Activated naive CD4-positive, alpha-beta T cell treated with anti-CD3 and anti-CD28 coated beads for 36 hours (primary cell): ENCODE measurements at regions of chr1 and their contacts with region 1.

Region 1: GRCh38 chr1:84936116-84936810 is 43.3 kb upstream of the LPAR3 start:
- DNase-seq: peak; percentile 43
- H3K4me3 Mint-ChIP-seq: no peak overlapping the region
- H3K27ac Mint-ChIP-seq: no peak overlapping the region
- H3K4me1 Mint-ChIP-seq: peaks cover 4% of the 10 kb centered on the region
- H3K27me3 Mint-ChIP-seq: no peaks in the 10 kb centered on the region

Region 2: GRCh38 chr1:83905315-83905907 is 1030.9 kb before region 1 on chr1:
- CTCF ChIA-PET with region 1: no interaction called
- intact Hi-C with region 1: loop called (anchors 10 kb)
- DNase-seq: peak; percentile 10
- H3K4me3 Mint-ChIP-seq: no peak overlapping the region
- H3K27ac Mint-ChIP-seq: no peak overlapping the region
- H3K4me1 Mint-ChIP-seq: no peaks in the 10 kb centered on the region
- H3K27me3 Mint-ChIP-seq: peaks cover 12% of the 10 kb centered on the region

Region 3: GRCh38 chr1:84758968-84759491 is 177.2 kb before region 1 on chr1:
- CTCF ChIA-PET with region 1: interaction called, 10 read pairs
- intact Hi-C with region 1: no loop called
- DNase-seq: peak; percentile 30
- H3K4me3 Mint-ChIP-seq: peak overlapping the region; percentile 38
- H3K27ac Mint-ChIP-seq: no peak overlapping the region
- H3K4me1 Mint-ChIP-seq: peaks cover 10% of the 10 kb centered on the region
- H3K27me3 Mint-ChIP-seq: peaks cover 7% of the 10 kb centered on the region

Region 4: GRCh38 chr1:84892705-84893618 is 43.3 kb before region 1 on chr1 and contains the start of gene LPAR3:
- CTCF ChIA-PET with region 1: interaction called, 12 read pairs
- intact Hi-C with region 1: no loop called
- DNase-seq: peak; percentile 48
- H3K4me3 Mint-ChIP-seq: peak within 1 kb of the TSS; percentile 65
- H3K27ac Mint-ChIP-seq: no peak within 1 kb of the TSS
- H3K4me1 Mint-ChIP-seq: peaks cover 15% of the 10 kb centered on the region
- H3K27me3 Mint-ChIP-seq: peaks cover 26% of the 10 kb centered on the region
- total RNA-seq, gene LPAR3: 0.74 to 1.1 TPM

Region 5: GRCh38 chr1:85894651-85895050 is 958.4 kb after region 1 on chr1:
- CTCF ChIA-PET with region 1: no interaction called
- intact Hi-C with region 1: no loop called
- DNase-seq: peak; percentile 30
- H3K4me3 Mint-ChIP-seq: no peak overlapping the region
- H3K27ac Mint-ChIP-seq: no peak overlapping the region
- H3K4me1 Mint-ChIP-seq: no peaks in the 10 kb centered on the region
- H3K27me3 Mint-ChIP-seq: peaks cover 2% of the 10 kb centered on the region